ENCODE measurements at regions of chr7 and their contacts with region 1.

Region 1: DNA sequence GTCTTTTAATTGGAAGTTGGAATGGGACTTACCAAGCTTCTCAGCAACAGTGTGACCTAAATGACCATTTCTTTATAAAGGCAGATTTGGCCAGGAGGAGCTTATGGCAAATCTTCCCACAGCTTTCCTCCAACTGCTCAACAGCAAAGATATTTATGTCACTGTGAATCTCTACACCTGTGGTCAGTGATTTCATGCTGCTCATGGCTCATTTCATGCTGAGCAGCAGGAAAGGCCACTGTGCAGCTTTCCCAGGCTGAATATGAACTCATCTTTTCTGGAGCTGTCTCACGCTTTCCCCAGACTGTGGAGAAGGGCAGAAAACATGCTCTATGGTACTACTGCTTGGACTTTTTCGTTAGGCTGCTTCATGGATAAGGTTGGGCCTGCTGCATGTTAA is 29.8 kb downstream of the CALCR start:
- ATAC-seq: peak in 1 of 8 experiments; percentile 19
- H3K4me3 ChIP-seq: no peak overlapping the region
- H3K27ac ChIP-seq: no peak overlapping the region
- H3K4me1 ChIP-seq: no peaks in the 10 kb centered on the region

Region 2: GRCh38 chr7:93249491-93250148 is 295.1 kb before region 1 on chr7:
- in situ Hi-C with region 1: loop called in 1 of 9 experiments (anchors 25 kb)
- ATAC-seq: peak in 2 of 8 experiments; percentile 33 to 90
- H3K4me3 ChIP-seq: no peak overlapping the region
- H3K27ac ChIP-seq: no peak overlapping the region
- H3K4me1 ChIP-seq: no peaks in the 10 kb centered on the region

Region 3: GRCh38 chr7:93442478-93443224 is 102.0 kb before region 1 on chr7:
- in situ Hi-C with region 1: loop called in 1 of 9 experiments (anchors 25 kb)
- ATAC-seq: peak in 3 of 8 experiments; percentile 33 to 67 (median 62)
- H3K4me3 ChIP-seq: no peak overlapping the region
- H3K27ac ChIP-seq: no peak overlapping the region
- H3K4me1 ChIP-seq: peaks cover 0 to 2% of the 10 kb centered on the region in 2 donors

Region 4: GRCh38 chr7:93817004-93817403 is 272.3 kb after region 1 on chr7:
- in situ Hi-C with region 1: no loop called
- ATAC-seq: no peak
- H3K4me3 ChIP-seq: no peak overlapping the region
- H3K27ac ChIP-seq: no peak overlapping the region
- H3K4me1 ChIP-seq: no peaks in the 10 kb centered on the region